ENCODE measurements at regions of chr19 and their contacts with region 1.

Region 1: GRCh38 chr19:45886427-45887199 is 672 bp upstream of the IRF2BP1 start:
- DNase-seq: peak; percentile 97 to 98
- ATAC-seq: peak; percentile 63 to 78
- H3K4me3 ChIP-seq: peak overlapping the region; percentile 87
- H3K27ac ChIP-seq: peak overlapping the region; percentile 95 to 97
- H3K4me1 ChIP-seq: peaks cover 37% of the 10 kb centered on the region
- CTCF ChIP-seq: no peak
- EP300 ChIP-seq: no peak
- POLR2A ChIP-seq: peak; percentile 37
- RAD21 ChIP-seq: no peak

Region 2: DNA sequence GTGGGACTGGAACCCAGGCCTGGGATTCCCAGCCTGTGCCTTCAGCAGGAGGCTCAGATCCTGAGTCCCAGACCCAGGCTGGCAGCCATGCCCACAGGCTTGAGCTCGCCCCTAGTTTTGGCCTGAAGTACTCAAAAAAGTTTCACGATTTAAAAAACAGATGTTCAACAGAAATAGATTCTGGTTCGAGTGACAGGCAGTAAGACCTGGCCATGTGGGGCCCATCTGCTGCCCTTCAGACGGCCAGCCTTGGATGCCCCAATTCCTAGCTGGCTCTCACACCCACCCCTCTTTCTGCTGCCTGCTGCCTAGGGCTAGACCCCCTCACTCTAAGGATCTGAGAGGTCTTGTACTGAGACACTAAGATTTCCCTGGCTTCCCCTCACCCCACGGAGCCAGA is 101.5 kb before region 1 on chr19:
- CTCF ChIA-PET with region 1: interaction called, 4 read pairs
- POLR2A ChIA-PET with region 1: interaction called, 12 read pairs
- DNase-seq: no peak
- ATAC-seq: no peak
- H3K4me3 ChIP-seq: no peak overlapping the region
- H3K27ac ChIP-seq: peak overlapping the region in 1 of 2 experiments; percentile 11; a peak in 2 of 6 replicates
- H3K4me1 ChIP-seq: peaks cover 44% of the 10 kb centered on the region
- CTCF ChIP-seq: no peak
- EP300 ChIP-seq: no peak
- POLR2A ChIP-seq: no peak
- RAD21 ChIP-seq: no peak

Region 3: GRCh38 chr19:45817010-45817724 is 69.4 kb before region 1 on chr19:
- CTCF ChIA-PET with region 1: interaction called, 151 read pairs
- POLR2A ChIA-PET with region 1: interaction called, 5 read pairs
- DNase-seq: peak; percentile 96 to 100
- ATAC-seq: peak; percentile 63 to 93
- H3K4me3 ChIP-seq: no peak overlapping the region
- H3K27ac ChIP-seq: peak overlapping the region in 1 of 2 experiments; percentile 61; a peak in 3 of 6 replicates
- H3K4me1 ChIP-seq: peaks cover 10% of the 10 kb centered on the region; the same call in 1 of the 3 replicates
- CTCF ChIP-seq: peak; percentile 100
- EP300 ChIP-seq: no peak
- POLR2A ChIP-seq: no peak
- RAD21 ChIP-seq: peak; percentile 80 to 85

Region 4: DNA sequence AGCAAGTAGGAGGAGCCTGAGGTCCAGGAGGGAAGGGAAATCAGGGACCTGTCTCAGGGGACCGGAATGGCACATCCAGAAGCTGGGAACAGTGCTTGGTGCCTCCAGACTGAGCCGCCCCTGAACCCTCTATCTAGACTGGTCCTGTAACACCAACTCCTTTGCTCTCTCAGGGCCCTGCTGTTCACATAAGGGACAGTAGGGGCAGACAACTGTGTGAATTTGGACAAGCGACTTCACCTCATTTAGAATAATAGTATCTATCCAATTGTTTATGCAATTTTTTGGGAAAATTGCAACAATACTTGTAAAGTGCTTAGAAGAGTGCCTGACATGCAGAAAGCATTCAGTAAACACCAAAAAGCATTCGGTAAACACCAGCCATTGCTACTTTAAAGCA is 37.7 kb before region 1 on chr19:
- CTCF ChIA-PET with region 1: interaction called, 20 read pairs
- POLR2A ChIA-PET with region 1: interaction called, 4 read pairs
- DNase-seq: peak; percentile 48 to 69
- ATAC-seq: peak; percentile 72 to 84
- H3K4me3 ChIP-seq: no peak overlapping the region
- H3K27ac ChIP-seq: no peak overlapping the region
- H3K4me1 ChIP-seq: no peaks in the 10 kb centered on the region
- CTCF ChIP-seq: no peak
- EP300 ChIP-seq: no peak
- POLR2A ChIP-seq: no peak
- RAD21 ChIP-seq: no peak

Region 5: DNA sequence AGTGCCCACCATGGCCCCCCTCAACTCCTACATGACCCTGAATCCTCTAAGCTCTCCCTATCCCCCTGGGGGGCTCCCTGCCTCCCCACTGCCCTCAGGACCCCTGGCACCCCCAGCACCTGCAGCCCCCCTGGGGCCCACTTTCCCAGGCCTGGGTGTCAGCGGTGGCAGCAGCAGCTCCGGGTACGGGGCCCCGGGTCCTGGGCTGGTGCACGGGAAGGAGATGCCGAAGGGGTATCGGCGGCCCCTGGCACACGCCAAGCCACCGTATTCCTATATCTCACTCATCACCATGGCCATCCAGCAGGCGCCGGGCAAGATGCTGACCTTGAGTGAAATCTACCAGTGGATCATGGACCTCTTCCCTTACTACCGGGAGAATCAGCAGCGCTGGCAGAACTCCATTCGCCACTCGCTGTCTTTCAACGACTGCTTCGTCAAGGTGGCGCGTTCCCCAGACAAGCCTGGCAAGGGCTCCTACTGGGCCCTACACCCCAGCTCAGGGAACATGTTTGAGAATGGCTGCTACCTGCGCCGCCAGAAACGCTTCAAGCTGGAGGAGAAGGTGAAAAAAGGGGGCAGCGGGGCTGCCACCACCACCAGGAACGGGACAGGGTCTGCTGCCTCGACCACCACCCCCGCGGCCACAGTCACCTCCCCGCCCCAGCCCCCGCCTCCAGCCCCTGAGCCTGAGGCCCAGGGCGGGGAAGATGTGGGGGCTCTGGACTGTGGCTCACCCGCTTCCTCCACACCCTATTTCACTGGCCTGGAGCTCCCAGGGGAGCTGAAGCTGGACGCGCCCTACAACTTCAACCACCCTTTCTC is 14.3 kb before region 1 on chr19:
- CTCF ChIA-PET with region 1: interaction called, 315 read pairs
- POLR2A ChIA-PET with region 1: interaction called, 3 read pairs
- DNase-seq: no peak
- ATAC-seq: no peak
- H3K4me3 ChIP-seq: no peak overlapping the region
- H3K27ac ChIP-seq: no peak overlapping the region
- H3K4me1 ChIP-seq: no peaks in the 10 kb centered on the region
- CTCF ChIP-seq: no peak
- EP300 ChIP-seq: no peak
- POLR2A ChIP-seq: no peak
- RAD21 ChIP-seq: no peak